ENCODE measurements at regions of chr1 and their contacts with region 1.

Region 1: GRCh38 chr1:170020859-170021258 is 53.6 kb downstream of the KIFAP3 start:
- DNase-seq: no peak
- H3K4me3 Mint-ChIP-seq: no peak overlapping the region
- H3K27ac Mint-ChIP-seq: no peak overlapping the region
- H3K4me1 Mint-ChIP-seq: no peaks in the 10 kb centered on the region
- H3K27me3 Mint-ChIP-seq: no peaks in the 10 kb centered on the region

Region 2: GRCh38 chr1:169893494-169894362 is 127.1 kb before region 1 on chr1 and contains the start of gene SCYL3:
- CTCF ChIA-PET with region 1: no interaction called
- intact Hi-C with region 1: no loop called
- DNase-seq: peak; percentile 94
- H3K4me3 Mint-ChIP-seq: peak within 1 kb of the TSS; percentile 87
- H3K27ac Mint-ChIP-seq: peak within 1 kb of the TSS; percentile 100
- H3K4me1 Mint-ChIP-seq: peaks cover 34% of the 10 kb centered on the region
- H3K27me3 Mint-ChIP-seq: no peaks in the 10 kb centered on the region
- total RNA-seq, gene SCYL3: 8.8 TPM

Region 3: DNA sequence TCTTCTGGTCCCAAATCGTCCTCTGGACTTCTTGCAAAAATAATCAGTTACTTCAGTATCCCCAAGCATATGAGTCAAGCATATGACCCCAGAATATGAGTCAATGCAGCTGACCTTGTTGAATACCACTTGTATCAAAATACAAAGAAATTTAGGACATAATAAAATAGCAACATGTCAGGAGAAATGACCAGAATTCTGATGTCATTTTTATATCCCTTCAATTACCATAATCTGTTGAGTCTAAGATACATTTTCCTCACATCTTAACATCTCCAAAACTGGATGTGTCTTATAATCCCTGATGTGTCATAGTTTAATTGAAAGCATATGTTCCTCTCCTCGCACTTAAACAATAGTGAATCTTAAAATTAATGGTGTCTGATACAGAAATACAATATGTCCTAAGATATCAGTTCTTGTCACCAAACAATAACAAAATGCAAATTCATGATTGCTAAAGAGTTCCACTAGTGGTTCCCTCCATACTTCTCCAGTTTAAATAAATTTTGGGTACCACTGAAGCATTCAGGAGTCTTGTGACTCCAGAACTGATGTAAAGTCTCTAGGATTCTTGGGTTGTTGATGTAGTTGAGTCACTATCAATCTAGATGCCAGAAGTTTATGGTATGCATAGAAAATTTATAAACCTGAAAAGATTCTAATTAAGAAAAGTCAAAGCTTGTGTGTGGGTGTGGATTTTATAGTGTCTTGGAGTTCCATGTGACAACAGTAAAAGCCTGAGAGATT is 11.8 kb after region 1 on chr1:
- CTCF ChIA-PET with region 1: no interaction called
- intact Hi-C with region 1: loop called (anchors 1 kb)
- DNase-seq: no peak
- H3K4me3 Mint-ChIP-seq: no peak overlapping the region
- H3K27ac Mint-ChIP-seq: no peak overlapping the region
- H3K4me1 Mint-ChIP-seq: peaks cover 3% of the 10 kb centered on the region
- H3K27me3 Mint-ChIP-seq: no peaks in the 10 kb centered on the region

Region 4: GRCh38 chr1:170568197-170568596 is 547.3 kb after region 1 on chr1:
- CTCF ChIA-PET with region 1: no interaction called
- intact Hi-C with region 1: no loop called
- DNase-seq: no peak
- H3K4me3 Mint-ChIP-seq: no peak overlapping the region
- H3K27ac Mint-ChIP-seq: no peak overlapping the region
- H3K4me1 Mint-ChIP-seq: peaks cover 4% of the 10 kb centered on the region
- H3K27me3 Mint-ChIP-seq: peaks cover 11% of the 10 kb centered on the region